ENCODE measurements at regions of chr19 and their contacts with region 1.

Region 1: GRCh38 chr19:45643024-45643926 is 4.1 kb upstream of the EML2 start:
- DNase-seq: peak; percentile 87 to 92 (median 89)
- H3K4me3 ChIP-seq: no peak overlapping the region
- H3K4me3 Mint-ChIP-seq: peak overlapping the region; percentile 77 to 92 (median 82)
- H3K27ac ChIP-seq: peak overlapping the region; percentile 98
- H3K27ac Mint-ChIP-seq: peak overlapping the region; percentile 91 to 98 (median 93)
- H3K4me1 ChIP-seq: peaks cover 63% of the 10 kb centered on the region
- H3K4me1 Mint-ChIP-seq: peaks cover 28 to 57% (median 41%) of the 10 kb centered on the region in 4 donors
- H3K27me3 ChIP-seq: no peaks in the 10 kb centered on the region
- H3K27me3 Mint-ChIP-seq: no peaks in the 10 kb centered on the region

Region 2: GRCh38 chr19:45413497-45413896 is 229.8 kb before region 1 on chr19:
- CTCF ChIA-PET with region 1: no interaction called
- POLR2A ChIA-PET with region 1: no interaction called
- intact Hi-C with region 1: no loop called
- DNase-seq: no peak
- H3K4me3 ChIP-seq: no peak overlapping the region
- H3K4me3 Mint-ChIP-seq: no peak overlapping the region
- H3K27ac ChIP-seq: no peak overlapping the region
- H3K27ac Mint-ChIP-seq: peak overlapping the region in 1 of 7 donors; percentile 22
- H3K4me1 ChIP-seq: no peaks in the 10 kb centered on the region
- H3K4me1 Mint-ChIP-seq: peaks cover 0 to under 1% (median 0%) of the 10 kb centered on the region in 4 donors
- H3K27me3 ChIP-seq: no peaks in the 10 kb centered on the region
- H3K27me3 Mint-ChIP-seq: no peaks in the 10 kb centered on the region

Region 3: DNA sequence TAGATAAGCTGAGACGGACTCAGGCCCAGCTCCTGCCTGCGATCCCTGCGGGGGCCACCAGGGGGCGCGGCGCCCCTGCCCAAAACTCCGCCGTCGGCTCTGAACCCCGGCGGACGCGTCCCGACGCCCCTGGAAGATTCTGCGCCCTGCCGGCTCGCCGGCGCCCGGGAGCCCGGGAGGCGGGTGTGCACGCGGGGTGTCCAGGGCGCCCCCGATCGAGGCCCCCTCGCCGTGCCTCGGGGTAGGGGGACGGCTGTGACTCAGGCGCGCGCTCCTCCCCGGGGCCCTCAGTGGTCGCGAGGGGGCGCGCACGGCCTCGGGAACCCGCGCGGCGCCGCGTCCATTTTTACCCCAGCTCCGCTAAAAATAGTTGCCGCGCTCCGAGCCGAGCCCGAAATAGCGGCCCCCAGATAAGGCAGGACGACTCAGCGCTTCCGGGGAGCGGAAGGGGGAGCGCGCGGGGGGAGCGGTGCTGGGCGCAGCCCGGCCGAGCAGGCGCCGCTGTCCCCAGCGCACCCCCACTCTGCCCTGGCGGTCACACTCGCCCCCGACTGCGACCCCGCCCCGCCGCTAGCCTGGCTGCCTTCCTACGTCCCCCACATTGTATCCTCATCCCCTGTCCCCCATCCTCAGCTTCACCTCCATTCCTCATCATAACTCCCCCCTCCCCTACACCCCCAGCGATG is 203.6 kb before region 1 on chr19:
- CTCF ChIA-PET with region 1: interaction called, 12 read pairs
- POLR2A ChIA-PET with region 1: interaction called, 3 read pairs
- intact Hi-C with region 1: no loop called
- DNase-seq: peak; percentile 87 to 90 (median 87)
- H3K4me3 ChIP-seq: peak overlapping the region in 1 of 2 donors; percentile 66
- H3K4me3 Mint-ChIP-seq: peak overlapping the region; percentile 65 to 83 (median 78)
- H3K27ac ChIP-seq: peak overlapping the region; percentile 62
- H3K27ac Mint-ChIP-seq: peak overlapping the region in 6 of 7 donors; percentile 83 to 96 (median 92)
- H3K4me1 ChIP-seq: peaks cover 36% of the 10 kb centered on the region
- H3K4me1 Mint-ChIP-seq: peaks cover 15 to 40% (median 27%) of the 10 kb centered on the region in 4 donors
- H3K27me3 ChIP-seq: no peaks in the 10 kb centered on the region
- H3K27me3 Mint-ChIP-seq: no peaks in the 10 kb centered on the region

Region 4: DNA sequence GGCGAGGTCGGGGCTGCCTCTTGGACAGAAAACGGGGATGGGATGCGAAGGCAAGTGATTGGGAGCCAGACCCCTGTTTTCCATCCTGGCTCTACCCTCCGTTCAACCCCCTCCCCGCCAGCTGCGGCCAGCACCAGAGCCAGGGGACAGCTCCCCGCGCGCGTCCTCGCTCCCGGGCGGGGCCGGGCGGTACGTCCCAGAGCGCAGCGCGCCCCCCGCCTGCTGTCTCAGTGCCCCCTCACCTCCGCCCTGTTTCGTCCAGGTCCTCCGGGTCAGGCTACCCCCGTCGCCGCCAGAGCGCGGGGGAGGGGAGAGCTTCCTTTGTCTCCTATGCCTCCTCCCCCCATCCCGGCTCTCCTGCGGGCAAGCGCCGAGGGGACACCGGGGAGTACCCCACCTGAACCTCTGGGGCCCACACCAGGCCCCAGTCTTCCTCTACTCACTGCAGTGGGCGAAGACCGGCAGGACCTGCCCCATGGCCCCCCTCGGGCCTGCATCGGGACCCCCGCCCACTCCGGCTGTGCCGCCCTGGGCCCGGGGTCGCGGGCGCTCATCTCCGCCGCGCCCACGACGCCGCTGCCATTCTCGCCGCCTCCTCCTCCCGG is 146.8 kb before region 1 on chr19:
- CTCF ChIA-PET with region 1: interaction called, 16 read pairs
- POLR2A ChIA-PET with region 1: interaction called, 11 read pairs
- intact Hi-C with region 1: loop called (anchors 2 kb)
- DNase-seq: peak; percentile 26 to 55 (median 44)
- H3K4me3 ChIP-seq: peak overlapping the region; percentile 23 to 54
- H3K4me3 Mint-ChIP-seq: peak overlapping the region; percentile 57 to 79 (median 69)
- H3K27ac ChIP-seq: no peak overlapping the region
- H3K27ac Mint-ChIP-seq: peak overlapping the region in 1 of 7 donors; percentile 91
- H3K4me1 ChIP-seq: peaks cover 44% of the 10 kb centered on the region
- H3K4me1 Mint-ChIP-seq: peaks cover 23 to 58% (median 41%) of the 10 kb centered on the region in 4 donors
- H3K27me3 ChIP-seq: peaks cover 10% of the 10 kb centered on the region
- H3K27me3 Mint-ChIP-seq: peaks cover 5 to 7% of the 10 kb centered on the region in 2 donors

Region 5: DNA sequence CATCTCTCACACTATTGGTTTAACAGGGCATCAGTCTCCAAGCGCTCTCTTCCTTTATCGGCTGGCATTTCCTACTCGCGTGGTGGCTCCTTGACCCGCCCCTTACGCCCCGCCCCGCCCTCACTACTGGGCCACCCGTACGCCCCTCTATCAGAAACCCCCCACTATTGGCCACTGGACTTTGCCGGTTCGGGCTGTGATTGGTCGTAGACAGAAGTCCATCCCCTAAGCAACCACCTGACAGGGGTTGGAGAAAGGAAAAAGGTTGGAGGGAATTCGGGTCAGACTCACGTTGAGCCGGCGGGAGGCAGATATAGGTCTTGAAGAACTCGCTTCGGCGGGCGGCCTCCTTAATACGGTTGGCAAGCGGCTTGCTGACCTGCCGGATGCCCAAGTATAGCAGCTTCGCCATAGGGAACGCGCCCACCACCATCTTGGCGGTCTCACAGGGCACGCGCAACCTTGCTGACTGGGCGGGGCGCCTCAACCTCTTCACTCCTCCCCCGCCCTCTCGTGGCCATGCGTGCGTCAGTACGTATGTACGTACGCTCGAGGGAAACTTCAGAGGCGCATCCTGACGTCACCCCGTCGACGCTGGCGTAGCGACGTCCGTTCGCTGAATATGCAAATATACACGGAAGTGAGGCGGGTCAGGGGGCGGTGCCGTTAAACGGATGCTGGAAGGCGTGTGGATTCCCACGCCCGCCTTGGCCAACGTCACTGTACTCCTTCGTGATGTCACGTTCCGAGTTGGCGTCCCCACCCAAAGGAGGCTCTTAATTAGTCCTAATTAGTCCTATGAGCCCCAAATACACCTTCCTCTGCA is 58.7 kb before region 1 on chr19 and contains the start of gene OPA3:
- CTCF ChIA-PET with region 1: interaction called, 8 read pairs
- POLR2A ChIA-PET with region 1: interaction called, 22 read pairs
- intact Hi-C with region 1: loop called (anchors 1 kb)
- DNase-seq: peak; percentile 98 to 100 (median 99)
- H3K4me3 ChIP-seq: peak within 1 kb of the TSS; percentile 84 to 99
- H3K4me3 Mint-ChIP-seq: peak within 1 kb of the TSS; percentile 87 to 97 (median 93)
- H3K27ac ChIP-seq: peak within 1 kb of the TSS; percentile 99
- H3K27ac Mint-ChIP-seq: peak within 1 kb of the TSS; percentile 93 to 100 (median 98)
- H3K4me1 ChIP-seq: peaks cover 11% of the 10 kb centered on the region
- H3K4me1 Mint-ChIP-seq: peaks cover 7 to 26% (median 16%) of the 10 kb centered on the region in 4 donors
- H3K27me3 ChIP-seq: no peaks in the 10 kb centered on the region
- H3K27me3 Mint-ChIP-seq: peaks cover 1 to 4% of the 10 kb centered on the region in 2 donors
- total RNA-seq, gene OPA3: 9.9 to 10.8 TPM

Region 6: DNA sequence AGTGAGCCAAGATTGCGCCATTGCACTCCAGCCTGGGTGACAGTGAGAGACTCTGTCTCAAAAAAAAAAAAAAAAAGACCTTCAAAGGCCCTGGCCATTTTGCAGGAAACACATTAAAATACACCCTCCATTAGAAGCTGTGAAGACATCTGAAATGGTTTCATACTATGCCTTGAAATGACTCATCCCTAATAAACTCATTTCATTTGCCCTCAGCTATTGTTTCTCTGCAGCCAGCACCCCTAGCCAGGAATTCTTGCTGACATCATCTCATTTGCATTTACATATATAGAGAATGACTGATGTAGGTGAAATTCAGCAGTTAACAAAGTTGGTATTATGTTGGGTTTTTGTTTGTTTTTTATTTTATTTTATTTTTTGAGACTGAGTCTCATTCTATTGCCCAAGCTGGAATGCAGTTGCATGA is 12.8 kb before region 1 on chr19:
- CTCF ChIA-PET with region 1: interaction called, 7 read pairs
- POLR2A ChIA-PET with region 1: interaction called, 13 read pairs
- intact Hi-C with region 1: no loop called
- DNase-seq: no peak
- H3K4me3 ChIP-seq: no peak overlapping the region
- H3K4me3 Mint-ChIP-seq: no peak overlapping the region
- H3K27ac ChIP-seq: no peak overlapping the region
- H3K27ac Mint-ChIP-seq: no peak overlapping the region
- H3K4me1 ChIP-seq: no peaks in the 10 kb centered on the region
- H3K4me1 Mint-ChIP-seq: peaks cover 0 to 2% (median under 1%) of the 10 kb centered on the region in 4 donors
- H3K27me3 ChIP-seq: no peaks in the 10 kb centered on the region
- H3K27me3 Mint-ChIP-seq: no peaks in the 10 kb centered on the region

Region 7: GRCh38 chr19:45692187-45693105 is 49.2 kb after region 1 on chr19 and contains the start of gene QPCTL:
- CTCF ChIA-PET with region 1: interaction called, 12 read pairs
- POLR2A ChIA-PET with region 1: interaction called, 16 read pairs
- intact Hi-C with region 1: loop called (anchors 1 kb)
- DNase-seq: peak; percentile 98 to 99 (median 98)
- H3K4me3 ChIP-seq: peak within 1 kb of the TSS; percentile 70 to 94
- H3K4me3 Mint-ChIP-seq: peak within 1 kb of the TSS; percentile 90 to 100 (median 94)
- H3K27ac ChIP-seq: peak within 1 kb of the TSS; percentile 88
- H3K27ac Mint-ChIP-seq: peak within 1 kb of the TSS; percentile 91 to 100 (median 97)
- H3K4me1 ChIP-seq: peaks cover 17% of the 10 kb centered on the region
- H3K4me1 Mint-ChIP-seq: peaks cover 11 to 35% (median 17%) of the 10 kb centered on the region in 4 donors
- H3K27me3 ChIP-seq: no peaks in the 10 kb centered on the region
- H3K27me3 Mint-ChIP-seq: no peaks in the 10 kb centered on the region
- total RNA-seq, gene QPCTL: 10.8 to 11.4 TPM

Measured in CD4-positive, alpha-beta memory T cell (primary cell).